B cell (primary cell): ENCODE measurements at regions of chr9 and their contacts with region 1.

Region 1: GRCh38 chr9:27276193-27277030 is 20.5 kb downstream of the EQTN start:
- DNase-seq: peak; percentile 63
- ATAC-seq: no peak
- H3K4me3 ChIP-seq: no peak overlapping the region
- H3K4me3 Mint-ChIP-seq: no peak overlapping the region
- H3K27ac ChIP-seq: no peak overlapping the region
- H3K27ac Mint-ChIP-seq: no peak overlapping the region
- H3K4me1 ChIP-seq: peaks cover 0 to 5% of the 10 kb centered on the region in 2 donors
- H3K4me1 Mint-ChIP-seq: peaks cover 4% of the 10 kb centered on the region
- H3K27me3 ChIP-seq: peaks cover 0 to 2% (median under 1%) of the 10 kb centered on the region in 4 experiments
- H3K27me3 Mint-ChIP-seq: peaks cover 6% of the 10 kb centered on the region
- CTCF ChIP-seq: peak; percentile 89

Region 2: DNA sequence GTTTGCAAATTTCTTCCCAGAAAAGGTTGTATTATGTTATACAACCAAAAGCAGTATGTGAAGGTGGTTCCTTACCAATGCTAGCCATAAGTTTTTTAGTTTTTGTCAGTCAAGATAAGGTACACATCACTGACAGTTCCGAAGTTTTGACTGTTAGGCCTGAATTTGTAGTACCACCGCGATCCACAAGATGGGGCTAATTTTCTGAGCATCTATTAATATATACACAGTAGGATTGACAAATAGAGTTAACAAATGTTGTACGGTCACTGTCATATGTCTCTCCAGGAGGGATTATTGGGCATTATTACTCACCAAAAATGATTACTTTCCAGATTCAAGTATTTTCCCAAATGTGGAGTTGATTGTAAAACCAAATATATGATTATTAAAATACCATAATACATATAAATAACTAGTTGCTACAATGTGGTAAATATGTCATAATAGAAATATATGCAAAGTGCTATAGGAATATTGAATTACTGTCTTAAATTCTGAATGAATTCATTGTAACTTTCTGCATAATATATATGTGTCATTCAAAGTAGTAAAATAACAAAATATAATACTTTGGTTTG is 242.5 kb before region 1 on chr9:
- CTCF ChIA-PET with region 1: no interaction called
- POLR2A ChIA-PET with region 1: no interaction called
- intact Hi-C with region 1: loop called (anchors 2 kb)
- DNase-seq: peak; percentile 52
- ATAC-seq: no peak
- H3K4me3 ChIP-seq: no peak overlapping the region
- H3K4me3 Mint-ChIP-seq: no peak overlapping the region
- H3K27ac ChIP-seq: no peak overlapping the region
- H3K27ac Mint-ChIP-seq: no peak overlapping the region
- H3K4me1 ChIP-seq: no peaks in the 10 kb centered on the region
- H3K4me1 Mint-ChIP-seq: no peaks in the 10 kb centered on the region
- H3K27me3 ChIP-seq: no peaks in the 10 kb centered on the region
- H3K27me3 Mint-ChIP-seq: no peaks in the 10 kb centered on the region
- CTCF ChIP-seq: peak; percentile 82

Region 3: GRCh38 chr9:27292659-27293405 is 16.4 kb after region 1 on chr9:
- CTCF ChIA-PET with region 1: interaction called, 13 read pairs
- POLR2A ChIA-PET with region 1: no interaction called
- intact Hi-C with region 1: no loop called
- DNase-seq: no peak
- ATAC-seq: no peak
- H3K4me3 ChIP-seq: no peak overlapping the region
- H3K4me3 Mint-ChIP-seq: no peak overlapping the region
- H3K27ac ChIP-seq: no peak overlapping the region
- H3K27ac Mint-ChIP-seq: no peak overlapping the region
- H3K4me1 ChIP-seq: no peaks in the 10 kb centered on the region
- H3K4me1 Mint-ChIP-seq: no peaks in the 10 kb centered on the region
- H3K27me3 ChIP-seq: no peaks in the 10 kb centered on the region
- H3K27me3 Mint-ChIP-seq: peaks cover 10% of the 10 kb centered on the region
- CTCF ChIP-seq: no peak

Region 4: DNA sequence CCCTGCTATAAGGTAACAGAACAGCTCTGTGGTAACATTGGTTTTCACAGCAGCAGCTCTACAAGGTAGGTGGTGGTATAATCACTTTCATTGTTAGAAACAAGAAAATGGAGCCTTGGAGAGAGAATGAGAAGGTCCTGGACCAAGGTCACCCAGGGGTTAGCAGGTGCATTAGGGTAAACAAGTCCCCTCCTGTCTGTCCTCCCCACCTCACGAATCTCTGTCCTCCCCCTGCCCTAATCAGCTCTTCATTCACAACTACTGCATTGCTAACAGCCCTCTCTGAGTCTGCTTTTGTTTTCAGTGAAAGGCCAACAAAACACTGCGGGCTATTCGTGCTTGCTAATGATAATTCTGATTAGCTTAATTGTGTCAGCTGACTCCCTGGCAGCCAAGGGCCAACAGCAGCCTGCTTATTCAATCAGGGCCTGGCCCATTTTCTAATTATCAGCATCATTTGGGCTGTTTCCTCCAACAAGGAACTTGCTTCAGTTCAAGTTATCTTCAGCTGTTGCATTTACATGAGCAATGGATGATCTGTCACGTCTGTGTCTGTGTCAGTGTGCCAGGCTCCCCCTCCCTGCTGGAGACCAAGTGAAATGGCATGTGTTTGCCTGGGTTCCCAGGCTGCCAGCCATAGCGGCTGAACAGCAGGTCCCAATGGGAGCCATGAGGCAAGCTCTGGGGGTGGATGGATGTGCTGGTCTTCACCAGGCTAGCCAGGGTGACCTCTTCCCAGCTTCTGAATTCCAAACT is 77.2 kb after region 1 on chr9:
- CTCF ChIA-PET with region 1: no interaction called
- POLR2A ChIA-PET with region 1: no interaction called
- intact Hi-C with region 1: no loop called
- DNase-seq: peak; percentile 48
- ATAC-seq: peak; percentile 68
- H3K4me3 ChIP-seq: no peak overlapping the region
- H3K4me3 Mint-ChIP-seq: no peak overlapping the region
- H3K27ac ChIP-seq: peak overlapping the region; percentile 0 to 58
- H3K27ac Mint-ChIP-seq: peak overlapping the region; percentile 84
- H3K4me1 ChIP-seq: peaks cover 31 to 34% of the 10 kb centered on the region in 2 donors
- H3K4me1 Mint-ChIP-seq: peaks cover 54% of the 10 kb centered on the region
- H3K27me3 ChIP-seq: no peaks in the 10 kb centered on the region
- H3K27me3 Mint-ChIP-seq: no peaks in the 10 kb centered on the region
- CTCF ChIP-seq: peak; percentile 16